ENCODE measurements at regions of chr17 and their contacts with region 1.

Region 1: GRCh38 chr17:81294856-81295680 is at the start of gene SLC38A10:
- DNase-seq: peak; percentile 88
- H3K4me3 ChIP-seq: peak within 1 kb of the TSS; percentile 75 to 90
- H3K27ac ChIP-seq: peak within 1 kb of the TSS; percentile 87 to 95
- H3K4me1 ChIP-seq: peaks cover 2% of the 10 kb centered on the region
- H3K27me3 ChIP-seq: no peaks in the 10 kb centered on the region
- CTCF ChIP-seq: peak in 3 of 4 experiments; percentile 25 to 40 (median 27)
- POLR2A ChIP-seq: peak; percentile 96
- total RNA-seq, gene SLC38A10: 104 to 167 TPM

Region 2: DNA sequence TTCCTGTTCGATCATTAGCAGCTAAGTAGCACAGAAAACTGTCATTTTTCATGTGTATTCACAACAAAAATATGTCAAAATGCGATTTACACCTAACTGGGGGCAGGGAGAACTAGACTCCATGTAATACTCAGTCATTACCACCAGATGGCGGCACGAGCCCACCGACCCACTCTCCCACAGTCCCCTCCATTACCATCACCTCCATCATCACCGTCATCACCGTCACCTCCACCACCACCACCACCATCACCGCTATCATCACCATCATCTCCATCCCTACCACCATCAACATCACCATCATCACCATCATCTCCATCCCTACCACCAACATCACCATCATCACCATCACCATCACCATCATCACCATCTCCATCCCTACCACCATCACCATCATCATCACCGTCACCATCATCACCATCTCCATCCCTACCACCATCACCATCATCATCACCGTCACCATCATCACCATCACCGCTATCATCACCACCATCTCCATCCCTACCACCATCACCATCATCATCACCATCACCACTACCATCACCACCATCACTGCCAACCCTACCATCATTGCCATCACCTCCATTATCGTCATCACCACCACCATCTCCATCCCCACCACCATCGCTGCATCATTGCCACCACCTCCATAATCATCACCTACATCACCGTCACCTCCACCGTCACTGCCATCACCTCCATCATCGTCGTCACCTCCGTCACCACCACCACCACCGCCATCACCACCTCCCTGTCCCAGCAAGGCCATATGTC is 41.5 kb before region 1 on chr17:
- intact Hi-C with region 1: loop called (anchors 5 kb)
- DNase-seq: peak; percentile 37
- H3K4me3 ChIP-seq: no peak overlapping the region
- H3K27ac ChIP-seq: no peak overlapping the region
- H3K4me1 ChIP-seq: peaks cover 7% of the 10 kb centered on the region
- H3K27me3 ChIP-seq: no peaks in the 10 kb centered on the region
- CTCF ChIP-seq: peak; percentile 76 to 93 (median 88)
- POLR2A ChIP-seq: no peak

Region 3: GRCh38 chr17:81342269-81343070 is 47.4 kb after region 1 on chr17:
- intact Hi-C with region 1: loop called (anchors 5 kb)
- DNase-seq: no peak
- H3K4me3 ChIP-seq: peak overlapping the region; percentile 83 to 90
- H3K27ac ChIP-seq: peak overlapping the region; percentile 99 to 100
- H3K4me1 ChIP-seq: peaks cover 15% of the 10 kb centered on the region
- H3K27me3 ChIP-seq: no peaks in the 10 kb centered on the region
- CTCF ChIP-seq: no peak
- POLR2A ChIP-seq: no peak

Region 4: DNA sequence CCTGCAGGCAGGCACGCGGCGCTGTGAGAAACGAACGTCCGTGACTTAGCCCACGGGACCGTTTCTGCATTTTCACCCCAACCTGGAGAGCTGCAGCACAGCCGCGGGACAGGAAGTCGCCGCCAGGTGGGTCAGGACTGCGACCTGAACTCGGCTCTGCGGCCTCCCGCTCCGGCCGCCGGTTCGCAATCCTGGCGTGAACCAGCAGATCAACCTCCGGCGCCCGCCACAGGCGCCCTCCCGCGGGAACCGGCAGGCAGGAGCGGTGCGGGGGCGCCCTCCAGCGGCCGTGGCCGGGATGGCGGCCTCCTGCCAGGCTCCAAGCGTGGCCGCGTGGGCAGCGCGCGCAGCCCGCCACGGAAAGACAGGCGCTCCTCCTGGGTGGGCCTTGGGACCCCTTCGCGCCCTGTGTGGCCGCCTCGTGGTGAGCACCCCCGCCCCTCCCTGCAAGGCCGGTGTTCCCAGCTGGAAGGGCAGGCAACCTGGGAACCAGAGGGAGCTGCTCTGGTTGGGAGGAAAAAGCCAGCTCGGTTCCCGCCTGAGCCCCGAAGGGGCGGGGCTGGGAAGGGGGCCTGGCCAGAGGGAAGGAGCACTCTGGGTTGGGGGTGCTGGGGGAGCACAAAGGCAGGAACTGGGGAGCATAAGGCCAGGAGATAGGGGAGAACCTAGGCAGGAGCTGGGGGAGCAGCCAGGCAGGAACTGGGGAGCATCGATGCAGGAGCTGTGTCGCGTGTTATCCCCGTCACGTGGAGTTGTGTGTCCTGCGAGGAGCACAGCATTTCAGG is 189.3 kb after region 1 on chr17:
- intact Hi-C with region 1: loop called (anchors 5 kb)
- DNase-seq: peak; percentile 84
- H3K4me3 ChIP-seq: peak overlapping the region; percentile 13 to 18
- H3K27ac ChIP-seq: no peak overlapping the region
- H3K4me1 ChIP-seq: peaks cover 11% of the 10 kb centered on the region
- H3K27me3 ChIP-seq: no peaks in the 10 kb centered on the region
- CTCF ChIP-seq: peak; percentile 99 to 100 (median 100)
- POLR2A ChIP-seq: peak; percentile 14

Region 5: DNA sequence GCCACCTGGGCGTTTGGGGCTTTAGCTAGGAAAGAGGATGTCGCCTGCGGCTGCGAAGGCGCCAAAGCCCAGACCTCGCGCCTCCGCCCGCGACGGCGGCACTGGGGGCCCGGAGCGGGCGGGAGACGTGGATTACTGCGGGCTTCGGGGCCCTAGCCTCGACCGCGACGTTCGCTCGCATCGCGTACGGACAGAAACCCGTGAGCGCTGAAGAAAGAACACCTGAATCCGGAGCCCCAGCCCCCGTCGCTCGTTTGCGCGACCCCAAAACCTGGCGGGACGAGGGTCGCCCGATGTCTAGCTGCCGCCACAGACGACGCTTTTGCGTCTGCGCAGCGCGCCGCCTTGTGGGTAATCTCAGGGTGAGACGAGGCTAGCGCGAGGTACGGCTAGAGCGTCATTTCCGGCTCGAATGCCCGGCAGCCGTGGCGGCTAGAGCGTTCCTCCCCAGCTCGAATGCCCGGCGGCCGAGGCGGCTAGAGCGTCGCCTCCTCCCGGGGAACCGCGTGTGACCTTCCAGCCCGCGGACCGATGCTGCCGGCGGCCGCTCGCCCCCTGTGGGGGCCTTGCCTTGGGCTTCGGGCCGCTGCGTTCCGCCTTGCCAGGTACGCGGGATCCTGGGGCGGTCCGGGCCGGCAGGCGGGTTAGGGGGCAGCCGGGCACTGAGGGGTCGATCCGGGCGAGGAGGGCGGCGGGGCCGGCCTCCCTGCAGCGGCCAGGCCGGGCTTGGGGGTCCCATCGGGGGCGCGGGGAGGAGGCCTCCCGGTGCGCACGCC is 408.1 kb after region 1 on chr17 and contains the start of gene MRPL12:
- intact Hi-C with region 1: no loop called
- DNase-seq: peak; percentile 94
- H3K4me3 ChIP-seq: peak within 1 kb of the TSS; percentile 73 to 95
- H3K27ac ChIP-seq: peak within 1 kb of the TSS; percentile 91 to 96
- H3K4me1 ChIP-seq: peaks cover 25% of the 10 kb centered on the region
- H3K27me3 ChIP-seq: no peaks in the 10 kb centered on the region
- CTCF ChIP-seq: peak in 3 of 4 experiments; percentile 24 to 74 (median 57)
- POLR2A ChIP-seq: peak; percentile 84
- total RNA-seq, gene MRPL12: 53.4 to 63.5 TPM